Gastrocnemius medialis (tissue), 4 donors: ENCODE measurements at regions of chr20 and their contacts with region 1.

Region 1: DNA sequence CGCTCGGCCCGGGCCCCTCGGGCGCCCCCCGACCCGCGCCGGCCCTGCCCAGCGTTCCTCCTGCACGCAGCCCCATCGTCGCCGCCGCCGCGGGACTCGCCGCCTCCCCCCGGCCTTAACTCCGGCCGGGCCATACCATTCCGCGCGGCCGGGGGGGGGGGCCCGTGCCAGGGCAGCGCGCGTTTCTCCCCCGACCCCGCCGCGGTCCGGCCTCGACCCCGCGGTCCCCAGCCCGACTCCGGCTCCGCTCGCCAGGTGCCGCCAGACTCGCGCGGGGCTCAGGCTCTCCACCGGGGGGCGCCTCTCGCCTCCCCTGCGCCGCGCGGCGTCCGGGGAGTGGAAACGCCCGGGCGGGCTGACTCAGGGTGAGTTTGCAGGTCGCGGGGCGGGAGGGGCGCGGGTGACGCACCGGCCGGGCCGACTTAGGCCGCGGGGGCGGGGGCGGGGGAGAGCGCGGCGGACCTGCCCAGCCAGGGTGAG is at the start of gene SRXN1:
- DNase-seq: peak; percentile 86 to 92
- ATAC-seq: peak; percentile 88 to 90
- H3K4me3 ChIP-seq: peak within 1 kb of the TSS; percentile 76 to 99 (median 82)
- H3K27ac ChIP-seq: peak within 1 kb of the TSS; percentile 83 to 99 (median 88)
- H3K4me1 ChIP-seq: peaks cover 19 to 21% of the 10 kb centered on the region in 2 donors
- H3K27me3 ChIP-seq: no peaks in the 10 kb centered on the region
- CTCF ChIP-seq: peak; percentile 35 to 80 (median 78)
- POLR2A ChIP-seq: peak; percentile 84 to 93
- total RNA-seq, gene SRXN1: 87.9 to 170 (median 128) TPM

Region 2: GRCh38 chr20:407133-407952 is 245.8 kb before region 1 on chr20:
- in situ Hi-C with region 1: no loop called
- intact Hi-C with region 1: loop called (anchors 5 kb)
- DNase-seq: peak; percentile 57 to 73
- ATAC-seq: peak; percentile 71 to 77
- H3K4me3 ChIP-seq: peak overlapping the region; percentile 63 to 94 (median 80)
- H3K27ac ChIP-seq: peak overlapping the region; percentile 95 to 98 (median 97)
- H3K4me1 ChIP-seq: peaks cover 25 to 26% of the 10 kb centered on the region in 2 donors
- H3K27me3 ChIP-seq: no peaks in the 10 kb centered on the region
- CTCF ChIP-seq: peak in 3 of 5 experiments; percentile 25 to 36 (median 28)
- POLR2A ChIP-seq: no peak

Region 3: DNA sequence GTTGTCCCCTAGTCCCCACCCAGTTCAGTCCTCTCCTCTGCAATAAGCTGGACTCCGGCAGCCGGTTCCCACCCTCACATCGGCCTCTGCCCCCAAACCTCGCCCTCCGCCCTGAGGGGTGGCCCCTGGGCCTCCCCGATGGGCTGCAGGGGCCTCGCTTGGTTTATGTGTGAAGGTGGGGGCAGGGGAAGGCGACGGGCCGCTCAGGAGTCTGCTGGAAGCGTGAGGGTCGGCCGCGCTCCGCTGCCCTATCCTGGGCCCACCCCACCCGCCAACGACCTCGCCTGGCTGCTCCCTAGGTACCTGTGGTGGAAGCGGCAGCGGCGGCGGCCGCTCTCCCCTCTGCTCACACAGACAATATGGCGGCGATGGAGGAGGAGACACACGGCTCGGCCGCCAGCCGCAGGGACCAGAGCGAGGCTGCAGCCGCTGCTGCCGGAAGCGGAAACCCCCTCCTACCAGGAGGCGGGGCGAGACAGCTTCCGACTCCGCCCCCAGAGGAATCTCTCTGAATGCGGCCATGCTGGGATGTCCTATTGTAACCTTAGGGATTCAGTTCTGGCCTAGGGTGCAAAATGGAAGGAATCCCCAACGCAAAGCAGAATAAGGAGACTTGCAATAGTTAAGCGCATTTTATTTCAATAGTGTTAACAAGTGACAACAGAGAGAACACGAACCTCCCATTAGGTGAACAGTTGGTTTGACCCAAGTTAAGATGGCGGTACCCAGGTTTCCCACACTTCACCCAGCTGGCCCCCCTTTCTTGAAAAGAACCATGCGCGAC is 109.6 kb before region 1 on chr20 and contains the start of gene CSNK2A1:
- in situ Hi-C with region 1: loop called in 1 of 4 experiments (anchors 10 kb)
- intact Hi-C with region 1: loop called (anchors 5 kb)
- DNase-seq: peak; percentile 86 to 93
- ATAC-seq: peak; percentile 97
- H3K4me3 ChIP-seq: peak within 1 kb of the TSS; percentile 77 to 100 (median 95)
- H3K27ac ChIP-seq: peak within 1 kb of the TSS; percentile 88 to 99 (median 96)
- H3K4me1 ChIP-seq: peaks cover 29 to 33% of the 10 kb centered on the region in 2 donors
- H3K27me3 ChIP-seq: no peaks in the 10 kb centered on the region
- CTCF ChIP-seq: no peak
- POLR2A ChIP-seq: peak; percentile 86 to 90
- total RNA-seq, gene CSNK2A1: 108 to 180 (median 157) TPM

Region 4: DNA sequence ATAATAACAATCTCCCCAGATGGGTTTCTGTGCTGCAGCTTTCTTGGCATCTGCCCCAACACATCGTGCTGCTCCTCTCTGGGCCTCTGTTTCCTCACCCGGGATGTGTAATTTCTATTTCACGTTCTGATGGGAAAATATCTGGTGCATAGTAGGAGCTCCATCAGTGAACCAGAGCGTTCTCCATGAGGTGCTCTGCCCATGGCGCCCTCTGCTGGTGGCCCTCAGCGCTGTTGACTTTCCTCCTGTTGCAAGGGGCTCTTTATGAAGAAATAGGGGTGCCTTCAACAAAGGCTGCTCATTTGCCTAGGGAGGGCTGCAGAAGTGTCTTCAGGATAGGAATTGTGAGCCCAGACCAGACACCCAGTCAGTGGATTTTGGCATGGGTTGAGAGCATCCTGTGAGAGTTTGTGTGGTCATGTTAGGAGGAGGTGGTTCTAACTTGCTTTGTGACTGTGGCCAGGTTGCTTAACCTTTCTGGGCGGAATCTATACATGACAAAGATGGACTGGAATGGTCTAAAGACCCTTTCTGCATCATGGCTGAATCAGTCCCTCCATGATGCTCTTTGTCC is 14.3 kb after region 1 on chr20:
- in situ Hi-C with region 1: no loop called
- intact Hi-C with region 1: loop called (anchors 1 kb)
- DNase-seq: peak in 1 of 2 donors; percentile 48
- ATAC-seq: peak; percentile 44 to 77
- H3K4me3 ChIP-seq: no peak overlapping the region
- H3K27ac ChIP-seq: no peak overlapping the region
- H3K4me1 ChIP-seq: peaks cover 11 to 12% of the 10 kb centered on the region in 2 donors
- H3K27me3 ChIP-seq: peaks cover 34 to 40% (median 35%) of the 10 kb centered on the region in 3 donors
- CTCF ChIP-seq: peak; percentile 70 to 88 (median 84)
- POLR2A ChIP-seq: no peak

Region 5: DNA sequence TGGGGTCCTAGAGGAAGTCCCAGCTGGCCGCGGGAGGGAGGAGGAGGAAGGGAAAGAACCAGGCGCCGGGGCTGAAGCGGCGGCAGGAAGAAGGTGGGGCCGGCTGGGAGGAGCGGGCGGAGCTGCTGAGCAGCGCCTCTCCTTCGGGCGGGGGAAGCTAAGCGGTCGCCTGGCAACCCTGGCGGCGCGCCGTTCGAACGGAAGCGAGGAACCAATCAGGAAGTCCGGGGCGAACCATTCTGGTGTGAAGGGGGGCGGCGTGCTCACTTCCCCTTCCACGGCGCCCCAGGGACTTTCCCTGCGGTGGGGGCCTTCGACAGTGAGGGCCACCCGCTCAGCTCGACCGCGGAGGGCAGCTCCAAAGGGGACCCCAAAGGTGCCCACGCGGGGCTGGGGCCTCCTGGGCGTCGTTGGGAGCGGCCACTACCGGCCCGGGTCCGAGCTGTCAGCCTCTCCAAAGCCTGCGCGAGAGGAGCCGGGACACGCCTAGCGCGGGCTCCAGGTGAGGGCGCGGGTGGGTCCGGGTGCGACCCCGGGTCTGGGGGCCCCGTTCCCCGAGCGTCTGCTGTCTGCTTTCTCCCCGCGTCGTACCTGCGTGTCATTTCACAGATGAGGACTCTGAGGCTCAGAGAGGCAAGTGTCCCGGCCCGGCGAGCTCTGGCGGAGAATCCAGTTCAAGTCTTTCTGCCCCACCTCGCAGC is 180.4 kb after region 1 on chr20 and contains the start of gene FAM110A:
- in situ Hi-C with region 1: no loop called
- intact Hi-C with region 1: loop called (anchors 2 kb)
- DNase-seq: peak; percentile 91 to 95
- ATAC-seq: peak; percentile 92 to 96
- H3K4me3 ChIP-seq: peak within 1 kb of the TSS; percentile 75 to 90 (median 83)
- H3K27ac ChIP-seq: peak within 1 kb of the TSS; percentile 82 to 86 (median 84)
- H3K4me1 ChIP-seq: peaks cover 32% of the 10 kb centered on the region in 2 donors
- H3K27me3 ChIP-seq: no peaks in the 10 kb centered on the region
- CTCF ChIP-seq: no peak
- POLR2A ChIP-seq: no peak
- total RNA-seq, gene FAM110A: 0.25 to 6.2 (median 1.9) TPM